BJ (cell line): ENCODE measurements at regions of chr3 and their contacts with region 1.

Region 1: GRCh38 chr3:39202094-39202493 is 9.7 kb upstream of the XIRP1 start:
- DNase-seq: no peak
- H3K4me3 ChIP-seq: no peak overlapping the region
- H3K27me3 ChIP-seq: peaks cover 11% of the 10 kb centered on the region
- CTCF ChIP-seq: no peak

Region 2: DNA sequence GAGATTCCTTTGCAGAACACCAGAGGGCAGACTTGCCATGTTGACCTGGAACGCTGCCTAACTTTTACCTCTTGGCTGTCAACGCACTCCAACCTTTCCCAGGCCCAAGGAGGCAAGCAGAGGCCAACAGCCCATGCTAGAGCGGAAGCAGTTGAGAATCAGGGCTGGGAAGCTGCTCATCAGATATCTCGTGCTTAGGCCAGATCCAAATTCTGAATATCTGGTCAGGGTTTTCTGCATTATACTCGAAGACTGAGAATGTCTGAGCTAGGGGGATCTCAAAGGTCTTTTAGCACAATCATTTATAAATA is 12.2 kb before region 1 on chr3:
- CTCF ChIA-PET with region 1: interaction called, 20 read pairs
- POLR2A ChIA-PET with region 1: no interaction called
- DNase-seq: no peak
- H3K4me3 ChIP-seq: no peak overlapping the region
- H3K27me3 ChIP-seq: no peaks in the 10 kb centered on the region
- CTCF ChIP-seq: peak; percentile 77